ENCODE measurements at regions of chr1 and their contacts with region 1.

Region 1: DNA sequence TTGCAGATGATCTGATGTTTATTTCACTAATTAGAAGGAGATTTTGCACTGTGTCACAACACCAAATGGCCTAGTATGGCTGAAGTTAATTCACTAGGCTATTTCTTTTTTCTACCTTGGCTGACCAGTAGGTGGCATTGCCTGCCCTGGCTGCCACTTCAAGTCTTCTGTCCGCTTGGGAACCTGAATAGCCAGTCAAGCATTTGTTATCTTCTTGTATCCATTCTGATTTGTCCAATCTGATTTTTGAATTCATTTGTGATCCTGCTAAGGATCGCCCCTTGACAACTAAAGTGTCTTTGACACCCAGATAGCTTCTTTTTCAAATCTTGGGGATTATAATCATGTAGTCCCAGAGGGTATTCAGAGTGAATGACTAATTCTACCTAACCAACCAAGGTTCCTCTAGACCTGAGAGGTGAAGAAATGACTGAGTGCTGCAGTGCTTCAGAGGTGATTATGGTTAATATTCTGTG is 99.4 kb downstream of the GIPC2 start:
- DNase-seq: no peak
- ATAC-seq: peak; percentile 85
- H3K4me3 ChIP-seq: no peak overlapping the region
- H3K27ac ChIP-seq: no peak overlapping the region
- H3K4me1 ChIP-seq: peaks cover 16% of the 10 kb centered on the region
- H3K27me3 ChIP-seq: no peaks in the 10 kb centered on the region
- CTCF ChIP-seq: peak; percentile 83 to 88 (median 87)
- EP300 ChIP-seq: no peak
- POLR2A ChIP-seq: no peak
- RAD21 ChIP-seq: peak; percentile 85

Region 2: GRCh38 chr1:78132174-78132947 is 12.8 kb before region 1 on chr1:
- CTCF ChIA-PET with region 1: interaction called, 112 read pairs
- POLR2A ChIA-PET with region 1: interaction called, 3 read pairs
- RAD21 ChIA-PET with region 1: interaction called, 25 read pairs
- SMC1A ChIA-PET with region 1: interaction called, 37 read pairs
- in situ Hi-C with region 1: no loop called
- intact Hi-C with region 1: no loop called
- DNase-seq: no peak
- ATAC-seq: peak; percentile 59
- H3K4me3 ChIP-seq: no peak overlapping the region
- H3K27ac ChIP-seq: no peak overlapping the region
- H3K4me1 ChIP-seq: no peaks in the 10 kb centered on the region; the same call in 1 of the 2 replicates
- H3K27me3 ChIP-seq: no peaks in the 10 kb centered on the region
- CTCF ChIP-seq: no peak
- EP300 ChIP-seq: no peak
- POLR2A ChIP-seq: no peak
- RAD21 ChIP-seq: no peak

Region 3: GRCh38 chr1:78281580-78281979 is 136.4 kb after region 1 on chr1:
- CTCF ChIA-PET with region 1: no interaction called
- POLR2A ChIA-PET with region 1: no interaction called
- RAD21 ChIA-PET with region 1: no interaction called
- SMC1A ChIA-PET with region 1: no interaction called
- in situ Hi-C with region 1: no loop called
- intact Hi-C with region 1: no loop called
- DNase-seq: no peak
- ATAC-seq: peak; percentile 46; the same call in 2 of the 3 replicates
- H3K4me3 ChIP-seq: no peak overlapping the region
- H3K27ac ChIP-seq: no peak overlapping the region
- H3K4me1 ChIP-seq: no peaks in the 10 kb centered on the region
- H3K27me3 ChIP-seq: no peaks in the 10 kb centered on the region
- CTCF ChIP-seq: no peak
- EP300 ChIP-seq: no peak
- POLR2A ChIP-seq: no peak
- RAD21 ChIP-seq: no peak

Region 4: GRCh38 chr1:78333502-78333901 is 188.4 kb after region 1 on chr1:
- CTCF ChIA-PET with region 1: interaction called, 10 read pairs
- POLR2A ChIA-PET with region 1: no interaction called
- RAD21 ChIA-PET with region 1: no interaction called
- SMC1A ChIA-PET with region 1: no interaction called
- in situ Hi-C with region 1: no loop called
- intact Hi-C with region 1: loop called (anchors 5 kb)
- DNase-seq: no peak
- ATAC-seq: peak; percentile 87
- H3K4me3 ChIP-seq: no peak overlapping the region
- H3K27ac ChIP-seq: no peak overlapping the region
- H3K4me1 ChIP-seq: no peaks in the 10 kb centered on the region
- H3K27me3 ChIP-seq: no peaks in the 10 kb centered on the region
- CTCF ChIP-seq: peak; percentile 57 to 83 (median 76)
- EP300 ChIP-seq: no peak
- POLR2A ChIP-seq: no peak
- RAD21 ChIP-seq: peak; percentile 44; the same call in 1 of the 2 replicates

Region 5: GRCh38 chr1:78607334-78607927 is 462.3 kb after region 1 on chr1:
- CTCF ChIA-PET with region 1: interaction called, 53 read pairs
- POLR2A ChIA-PET with region 1: no interaction called
- RAD21 ChIA-PET with region 1: interaction called, 12 read pairs
- SMC1A ChIA-PET with region 1: interaction called, 23 read pairs
- in situ Hi-C with region 1: no loop called
- intact Hi-C with region 1: loop called (anchors 1 kb)
- DNase-seq: no peak
- ATAC-seq: peak; percentile 61
- H3K4me3 ChIP-seq: no peak overlapping the region
- H3K27ac ChIP-seq: no peak overlapping the region
- H3K4me1 ChIP-seq: no peaks in the 10 kb centered on the region
- H3K27me3 ChIP-seq: no peaks in the 10 kb centered on the region
- CTCF ChIP-seq: peak; percentile 30 to 51 (median 31); a peak in 4 of 6 replicates
- EP300 ChIP-seq: no peak
- POLR2A ChIP-seq: no peak
- RAD21 ChIP-seq: peak; percentile 62

Measured in GM12878 (cell line).